ENCODE measurements at regions of chr2 and their contacts with region 1.

Region 1: GRCh38 chr2:208392300-208393080 is 14.1 kb upstream of the PTH2R start:
- DNase-seq: no peak
- H3K4me3 Mint-ChIP-seq: no peak overlapping the region
- H3K27ac Mint-ChIP-seq: no peak overlapping the region
- H3K4me1 Mint-ChIP-seq: peaks cover 5% of the 10 kb centered on the region
- H3K27me3 Mint-ChIP-seq: peaks cover 7% of the 10 kb centered on the region

Region 2: GRCh38 chr2:207746131-207746530 is 646.4 kb before region 1 on chr2:
- intact Hi-C with region 1: no loop called
- DNase-seq: peak; percentile 83
- H3K4me3 Mint-ChIP-seq: no peak overlapping the region
- H3K27ac Mint-ChIP-seq: no peak overlapping the region
- H3K4me1 Mint-ChIP-seq: no peaks in the 10 kb centered on the region
- H3K27me3 Mint-ChIP-seq: no peaks in the 10 kb centered on the region

Region 3: GRCh38 chr2:209577376-209578357 is 1185.2 kb after region 1 on chr2:
- intact Hi-C with region 1: loop called (anchors 1 kb)
- DNase-seq: no peak
- H3K4me3 Mint-ChIP-seq: no peak overlapping the region
- H3K27ac Mint-ChIP-seq: no peak overlapping the region
- H3K4me1 Mint-ChIP-seq: peaks cover 2% of the 10 kb centered on the region
- H3K27me3 Mint-ChIP-seq: peaks cover 5% of the 10 kb centered on the region

Region 4: GRCh38 chr2:209960676-209961630 is 1568.5 kb after region 1 on chr2:
- intact Hi-C with region 1: loop called (anchors 1 kb)
- DNase-seq: peak; percentile 75
- H3K4me3 Mint-ChIP-seq: no peak overlapping the region
- H3K27ac Mint-ChIP-seq: no peak overlapping the region
- H3K4me1 Mint-ChIP-seq: no peaks in the 10 kb centered on the region
- H3K27me3 Mint-ChIP-seq: peaks cover 8% of the 10 kb centered on the region